K562 (cell line): ENCODE measurements at regions of chr12 and their contacts with region 1.

Region 1: DNA sequence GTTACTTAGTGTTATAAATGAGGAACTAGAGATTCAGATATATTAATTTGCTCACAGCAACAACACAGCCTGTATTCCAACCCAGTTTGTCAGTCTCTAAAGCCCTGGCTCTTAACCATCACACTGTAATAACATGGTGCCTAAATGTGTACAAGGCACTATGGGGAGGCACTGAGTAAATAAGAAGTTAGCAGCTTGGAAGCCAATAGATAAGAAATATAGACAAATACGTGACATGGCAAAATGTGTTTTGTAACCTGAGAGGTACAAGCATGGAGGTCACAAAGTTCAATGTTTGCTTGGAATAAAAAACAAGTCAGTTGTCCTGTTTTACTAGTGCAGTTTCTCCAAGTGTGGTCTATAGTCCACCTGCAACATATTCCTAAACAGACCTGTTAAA is 16.3 kb upstream of the SLCO1A2 start:
- DNase-seq: peak; percentile 51 to 72 (median 56)
- ATAC-seq: peak; percentile 94
- H3K4me3 ChIP-seq: no peak overlapping the region
- H3K27ac ChIP-seq: peak overlapping the region; percentile 61
- H3K4me1 ChIP-seq: peaks cover 0 to 30% of the 10 kb centered on the region in 2 experiments; a peak in 3 of 5 replicates
- H3K27me3 ChIP-seq: no peaks in the 10 kb centered on the region
- CTCF ChIP-seq: no peak
- EP300 ChIP-seq: peak; percentile 85
- POLR2A ChIP-seq: no peak
- RAD21 ChIP-seq: no peak

Region 2: GRCh38 chr12:21416511-21417121 is 65.6 kb after region 1 on chr12:
- CTCF ChIA-PET with region 1: no interaction called
- POLR2A ChIA-PET with region 1: no interaction called
- in situ Hi-C with region 1: no loop called
- intact Hi-C with region 1: loop called (anchors 5 kb)
- DNase-seq: no peak
- ATAC-seq: no peak
- H3K4me3 ChIP-seq: no peak overlapping the region
- H3K27ac ChIP-seq: no peak overlapping the region
- H3K4me1 ChIP-seq: peaks cover 3 to 8% of the 10 kb centered on the region in 2 experiments; a peak in 3 of 5 replicates
- H3K27me3 ChIP-seq: no peaks in the 10 kb centered on the region
- CTCF ChIP-seq: no peak
- EP300 ChIP-seq: no peak
- POLR2A ChIP-seq: no peak
- RAD21 ChIP-seq: no peak